Dendritic cell treated with granulocyte-macrophage colony-stimulating factor and Interleukin-4, amounts not matched to agents 40 ng/mL and 50 ng/mL, for 4 days (primary cell): ENCODE measurements at regions of chr7 and their contacts with region 1.

Region 1: DNA sequence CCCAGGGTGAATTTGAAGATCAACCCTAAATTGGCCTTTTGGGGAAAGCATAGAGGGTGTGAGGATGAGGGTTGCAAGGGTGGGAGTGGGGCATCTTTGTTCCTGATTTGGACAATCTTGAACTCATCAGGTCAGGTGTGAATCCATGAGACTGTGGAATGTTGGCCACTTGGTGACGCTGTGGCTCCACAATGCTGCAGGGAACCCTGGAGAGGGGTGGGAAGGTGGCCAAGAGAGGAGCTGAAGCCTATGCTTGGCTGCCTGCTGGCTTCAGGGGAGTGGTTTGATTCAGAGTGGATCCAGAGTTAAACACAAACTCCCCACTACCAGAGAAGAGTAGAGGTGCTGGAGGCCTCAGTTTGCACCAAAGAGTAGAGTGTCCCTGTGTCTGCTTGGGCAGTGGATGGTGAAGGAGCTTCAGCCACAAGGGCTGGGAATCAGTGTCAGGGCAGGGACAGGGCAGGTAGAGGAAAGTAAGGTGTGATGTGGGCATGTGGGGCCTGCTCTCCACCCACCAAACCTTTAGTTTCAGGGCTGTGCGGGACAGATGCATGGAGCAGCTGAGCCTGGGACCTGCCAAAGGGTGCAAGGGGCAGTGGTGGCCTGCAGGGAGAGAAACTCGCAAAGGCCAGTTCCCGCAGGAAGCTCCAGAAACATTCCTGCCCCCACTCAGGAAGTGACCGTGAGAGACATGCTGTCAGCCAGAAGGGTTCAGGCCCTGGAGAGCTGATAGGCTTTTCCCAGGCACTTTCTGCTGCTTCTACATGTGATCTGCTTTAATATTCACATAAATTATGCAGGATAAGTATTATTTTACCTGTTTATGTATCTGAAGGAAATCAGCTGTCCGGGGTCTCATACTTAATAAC is 81.0 kb upstream of the PRSS58 start:
- H3K4me3 Mint-ChIP-seq: no peak overlapping the region
- H3K27ac Mint-ChIP-seq: no peak overlapping the region
- H3K4me1 Mint-ChIP-seq: peaks cover 5% of the 10 kb centered on the region
- H3K27me3 Mint-ChIP-seq: no peaks in the 10 kb centered on the region

Region 2: DNA sequence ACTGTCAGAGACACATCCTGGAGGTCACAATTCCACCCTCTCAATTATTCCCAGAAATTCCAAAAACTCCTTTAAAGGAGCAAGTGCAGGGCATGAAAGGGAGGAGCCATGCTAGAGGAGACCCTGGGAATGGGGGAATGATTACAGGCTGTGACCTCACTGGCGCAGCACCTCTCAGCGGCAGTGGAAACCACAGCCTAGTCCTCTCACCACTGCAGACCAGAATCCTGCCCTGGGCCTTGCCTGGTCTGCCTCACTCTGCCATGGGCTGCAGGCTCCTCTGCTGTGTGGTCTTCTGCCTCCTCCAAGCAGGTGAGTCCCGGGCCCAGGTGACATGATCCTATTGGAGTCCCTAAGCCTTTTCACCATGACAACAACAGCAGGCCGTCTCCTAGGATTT is 30.5 kb before region 1 on chr7:
- intact Hi-C with region 1: loop called (anchors 1 kb)
- H3K4me3 Mint-ChIP-seq: no peak overlapping the region
- H3K27ac Mint-ChIP-seq: no peak overlapping the region
- H3K4me1 Mint-ChIP-seq: peaks cover 6% of the 10 kb centered on the region
- H3K27me3 Mint-ChIP-seq: peaks cover 5% of the 10 kb centered on the region

Region 3: GRCh38 chr7:142385491-142386340 is 46.8 kb after region 1 on chr7:
- intact Hi-C with region 1: no loop called
- H3K4me3 Mint-ChIP-seq: no peak overlapping the region
- H3K27ac Mint-ChIP-seq: peak overlapping the region; percentile 78
- H3K4me1 Mint-ChIP-seq: peaks cover 21% of the 10 kb centered on the region
- H3K27me3 Mint-ChIP-seq: no peaks in the 10 kb centered on the region